Right cardiac atrium (tissue), 5 donors: ENCODE measurements at regions of chr2 and their contacts with region 1.

Region 1: DNA sequence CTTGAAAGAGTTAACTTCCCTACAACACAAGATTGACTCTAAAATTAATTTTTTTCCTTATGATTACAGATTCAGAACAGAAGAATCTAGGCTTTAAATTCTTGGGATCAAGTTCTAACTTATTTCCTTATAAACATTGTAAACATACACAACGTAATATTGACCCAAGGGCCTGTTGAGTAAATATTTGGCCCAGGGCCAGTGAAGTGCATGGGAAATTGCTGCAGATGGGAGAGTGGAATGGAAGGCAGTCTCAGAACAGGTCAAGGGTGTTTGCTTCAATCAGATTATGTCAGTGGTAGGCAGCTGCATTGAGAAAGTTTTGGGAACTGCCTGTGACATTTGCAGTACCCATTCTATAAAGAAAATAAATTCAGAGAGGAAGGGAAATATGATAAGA is 137.6 kb downstream of the MYO1B start:
- DNase-seq: no peak
- ATAC-seq: peak in 1 of 2 donors; percentile 26
- H3K4me3 ChIP-seq: no peak overlapping the region
- H3K27ac ChIP-seq: no peak overlapping the region
- H3K4me1 ChIP-seq: peaks cover 1% of the 10 kb centered on the region
- H3K27me3 ChIP-seq: no peaks in the 10 kb centered on the region

Region 2: DNA sequence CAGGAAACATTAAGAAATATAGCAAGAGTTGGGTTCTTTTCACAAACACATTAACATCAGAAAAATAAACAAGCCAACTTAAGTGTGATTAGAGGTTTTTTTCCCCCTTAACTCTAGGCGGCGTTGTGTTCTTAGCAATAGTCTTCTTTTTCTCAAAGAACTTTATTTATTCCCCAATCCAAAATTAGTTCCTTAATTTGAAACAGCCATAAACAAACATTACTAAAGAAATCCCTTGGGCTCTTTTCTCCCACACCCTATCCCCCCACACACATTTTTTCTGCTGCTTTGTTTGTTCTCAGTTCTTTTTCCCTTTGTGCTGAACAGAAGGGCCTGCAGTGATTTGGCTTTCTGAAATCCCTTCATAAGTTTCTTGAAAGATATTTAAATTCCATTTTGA is 150.8 kb before region 1 on chr2:
- intact Hi-C with region 1: loop called in 1 of 4 experiments (anchors 10 kb)
- DNase-seq: no peak
- ATAC-seq: no peak
- H3K4me3 ChIP-seq: no peak overlapping the region
- H3K27ac ChIP-seq: no peak overlapping the region
- H3K4me1 ChIP-seq: peaks cover 2% of the 10 kb centered on the region
- H3K27me3 ChIP-seq: no peaks in the 10 kb centered on the region

Region 3: DNA sequence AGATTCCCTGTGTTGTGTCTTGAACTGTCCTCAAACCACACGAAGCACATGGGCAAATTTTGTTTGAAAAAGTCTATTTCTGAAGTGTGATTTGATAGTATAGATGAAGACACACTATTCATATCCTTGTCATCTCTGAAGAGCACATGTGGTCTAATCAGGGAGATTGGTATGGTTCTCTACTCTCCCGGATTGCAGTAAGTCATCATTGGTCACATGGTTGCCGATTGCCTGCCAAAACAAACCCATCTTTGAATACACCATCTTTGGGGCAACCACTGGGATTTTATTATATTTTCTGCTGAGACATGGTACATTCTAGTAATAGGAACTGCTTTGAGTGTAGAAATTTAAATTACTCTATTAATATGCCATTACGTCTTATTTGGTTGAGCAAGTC is 49.3 kb after region 1 on chr2:
- intact Hi-C with region 1: no loop called
- DNase-seq: no peak
- ATAC-seq: no peak
- H3K4me3 ChIP-seq: no peak overlapping the region
- H3K27ac ChIP-seq: no peak overlapping the region
- H3K4me1 ChIP-seq: no peaks in the 10 kb centered on the region
- H3K27me3 ChIP-seq: no peaks in the 10 kb centered on the region